ENCODE measurements at regions of chr6 and their contacts with region 1.

Region 1: DNA sequence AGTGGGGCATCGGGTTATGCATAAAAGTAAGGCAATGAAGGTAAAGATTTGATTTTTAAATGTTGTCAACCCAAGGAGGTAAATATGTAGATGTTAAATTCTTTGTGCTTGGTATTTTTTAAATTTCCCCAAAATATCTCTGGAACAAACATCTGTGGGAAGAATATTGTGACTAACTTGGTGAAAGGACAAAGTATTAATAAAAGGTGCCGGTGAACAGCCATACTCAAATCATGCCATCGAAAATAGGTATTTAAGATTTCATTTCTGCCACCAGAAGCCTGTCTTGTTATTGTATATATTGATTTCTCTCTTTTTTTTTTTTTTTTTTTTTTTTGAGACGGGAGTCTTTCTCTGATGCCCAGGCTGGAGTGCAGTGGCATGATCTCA is 12.6 kb upstream of the ZBTB2 start:
- DNase-seq: no peak
- CTCF ChIP-seq: no peak

Region 2: GRCh38 chr6:151392427-151392826 is 11.5 kb before region 1 on chr6:
- CTCF ChIA-PET with region 1: interaction called, 64 read pairs
- POLR2A ChIA-PET with region 1: interaction called, 5 read pairs
- DNase-seq: no peak
- CTCF ChIP-seq: no peak

Measured in GM10248 (cell line).